SK-N-SH (cell line): ENCODE measurements at regions of chrX and their contacts with region 1.

Region 1: DNA sequence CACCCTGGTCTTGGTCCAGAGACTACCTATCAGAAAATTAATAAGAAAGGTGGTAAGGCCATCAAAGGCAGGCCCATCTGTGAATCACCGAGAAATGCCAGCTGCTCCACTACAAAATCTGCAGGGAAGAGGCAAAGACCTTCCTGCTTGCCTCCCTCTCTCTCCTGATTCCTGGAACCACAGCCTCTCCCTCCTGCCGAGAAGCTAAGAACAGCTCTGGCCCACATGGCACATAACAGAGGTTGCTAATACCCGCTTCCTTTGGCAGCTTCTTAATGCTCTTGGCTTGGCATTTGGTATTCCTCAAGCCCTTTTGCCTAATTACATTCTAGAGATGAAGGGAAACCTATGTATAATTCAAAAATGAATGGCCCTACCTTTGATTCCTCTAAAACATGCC is 32.9 kb downstream of the RAI2 start:
- DNase-seq: no peak
- H3K4me3 ChIP-seq: no peak overlapping the region
- H3K27ac ChIP-seq: no peak overlapping the region
- H3K4me1 ChIP-seq: no peaks in the 10 kb centered on the region
- H3K27me3 ChIP-seq: peaks cover 10% of the 10 kb centered on the region; the same call in 1 of the 2 replicates
- CTCF ChIP-seq: no peak
- EP300 ChIP-seq: no peak
- RAD21 ChIP-seq: no peak

Region 2: DNA sequence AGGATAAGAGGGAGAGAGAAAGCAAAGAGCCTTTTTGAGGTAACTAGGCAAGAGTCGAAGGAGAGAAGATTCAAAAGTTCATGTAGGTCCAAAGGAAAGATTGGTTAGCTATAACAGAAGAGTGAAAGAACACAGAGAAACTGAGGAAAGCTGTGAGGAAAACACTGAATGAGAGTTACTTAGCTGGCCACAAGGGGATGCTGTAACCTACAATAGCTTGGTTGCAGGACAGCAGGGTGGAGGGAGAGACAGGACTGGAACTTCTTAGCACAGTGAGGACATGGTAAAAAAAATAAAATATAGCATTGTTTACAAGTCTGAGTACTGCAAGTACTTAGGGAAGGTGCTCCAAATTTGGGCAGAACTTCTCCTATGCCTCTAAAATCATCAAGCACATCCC is 15.4 kb before region 1 on chrX:
- CTCF ChIA-PET with region 1: interaction called, 12 read pairs
- POLR2A ChIA-PET with region 1: no interaction called
- DNase-seq: peak; percentile 38
- H3K4me3 ChIP-seq: no peak overlapping the region
- H3K27ac ChIP-seq: no peak overlapping the region
- H3K4me1 ChIP-seq: no peaks in the 10 kb centered on the region
- H3K27me3 ChIP-seq: no peaks in the 10 kb centered on the region
- CTCF ChIP-seq: peak; percentile 50
- EP300 ChIP-seq: no peak
- RAD21 ChIP-seq: peak; percentile 66

Region 3: GRCh38 chrX:17888421-17888820 is 60.2 kb after region 1 on chrX:
- CTCF ChIA-PET with region 1: no interaction called
- POLR2A ChIA-PET with region 1: no interaction called
- DNase-seq: no peak
- H3K4me3 ChIP-seq: no peak overlapping the region
- H3K27ac ChIP-seq: no peak overlapping the region
- H3K4me1 ChIP-seq: no peaks in the 10 kb centered on the region
- H3K27me3 ChIP-seq: no peaks in the 10 kb centered on the region
- CTCF ChIP-seq: peak; percentile 29; the same call in 1 of the 2 replicates
- EP300 ChIP-seq: no peak
- RAD21 ChIP-seq: no peak